Activated naive CD4-positive, alpha-beta T cell treated with anti-CD3 and anti-CD28 coated beads for 36 hours (primary cell): ENCODE measurements at regions of chr18 and their contacts with region 1.

Region 1: DNA sequence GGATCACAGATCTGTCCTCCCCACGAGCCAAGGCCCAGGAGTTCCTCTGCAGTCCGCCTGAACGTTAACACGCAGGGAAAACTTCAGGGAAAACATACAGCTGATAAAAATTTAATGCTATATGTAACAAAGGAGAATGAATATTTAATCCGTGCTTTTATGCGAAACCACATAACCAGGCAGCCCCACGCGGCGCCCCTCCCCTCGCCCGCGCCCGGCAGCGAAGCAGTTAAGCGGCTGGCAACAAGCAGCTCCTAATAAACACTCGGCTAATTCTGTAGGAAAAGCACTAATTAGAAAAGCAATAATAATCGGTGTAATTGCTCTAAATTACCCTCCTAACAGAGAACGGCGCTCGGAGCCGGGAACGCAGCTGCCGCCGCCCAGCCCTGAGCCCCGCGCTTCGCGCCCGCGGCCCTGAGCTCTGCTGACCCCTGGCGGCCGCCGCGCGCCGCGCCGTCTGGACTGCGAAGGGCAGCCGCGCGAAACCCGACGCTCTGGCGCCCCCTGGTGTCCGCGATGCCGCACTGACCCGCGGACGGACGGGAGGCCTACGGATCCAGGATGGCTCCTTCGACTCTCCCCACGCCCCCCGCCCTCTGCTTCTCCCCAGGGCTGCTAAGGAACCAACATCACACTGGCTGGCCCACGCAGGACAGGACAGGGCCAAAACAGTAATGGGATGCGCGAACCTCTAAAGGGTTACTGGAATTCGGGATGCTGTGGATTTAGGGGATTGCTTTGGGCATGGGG is 181.4 kb downstream of the SMAD2 start:
- DNase-seq: peak; percentile 79
- H3K4me3 Mint-ChIP-seq: no peak overlapping the region
- H3K27ac Mint-ChIP-seq: no peak overlapping the region
- H3K4me1 Mint-ChIP-seq: no peaks in the 10 kb centered on the region
- H3K27me3 Mint-ChIP-seq: peaks cover 7% of the 10 kb centered on the region

Region 2: DNA sequence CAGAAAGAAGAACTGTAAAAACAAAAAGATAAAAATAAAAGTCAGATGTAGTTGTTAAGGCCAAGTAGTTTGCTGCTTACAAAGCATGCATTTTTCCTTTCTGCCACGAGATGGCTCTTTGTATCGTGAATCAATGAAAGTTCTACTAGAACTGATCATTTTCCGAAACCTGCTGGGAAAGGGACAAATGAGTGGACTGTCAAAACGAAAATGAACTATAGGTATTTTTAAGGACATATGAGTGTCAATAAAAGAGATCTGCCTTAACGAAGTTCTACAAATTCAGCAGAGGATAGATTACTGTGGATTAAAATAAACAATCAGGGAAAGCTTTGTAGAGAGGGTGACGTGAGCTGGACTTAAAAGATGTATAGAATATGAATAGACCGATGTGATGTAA is 698.6 kb before region 1 on chr18:
- CTCF ChIA-PET with region 1: interaction called, 3 read pairs
- intact Hi-C with region 1: loop called (anchors 2 kb)
- DNase-seq: peak; percentile 31
- H3K4me3 Mint-ChIP-seq: no peak overlapping the region
- H3K27ac Mint-ChIP-seq: no peak overlapping the region
- H3K4me1 Mint-ChIP-seq: peaks cover 3% of the 10 kb centered on the region
- H3K27me3 Mint-ChIP-seq: peaks cover 3% of the 10 kb centered on the region

Region 3: GRCh38 chr18:47100214-47100831 is 648.7 kb before region 1 on chr18:
- CTCF ChIA-PET with region 1: interaction called, 5 read pairs
- intact Hi-C with region 1: loop called (anchors 1 kb)
- DNase-seq: peak; percentile 83
- H3K4me3 Mint-ChIP-seq: no peak overlapping the region
- H3K27ac Mint-ChIP-seq: no peak overlapping the region
- H3K4me1 Mint-ChIP-seq: no peaks in the 10 kb centered on the region
- H3K27me3 Mint-ChIP-seq: no peaks in the 10 kb centered on the region

Region 4: DNA sequence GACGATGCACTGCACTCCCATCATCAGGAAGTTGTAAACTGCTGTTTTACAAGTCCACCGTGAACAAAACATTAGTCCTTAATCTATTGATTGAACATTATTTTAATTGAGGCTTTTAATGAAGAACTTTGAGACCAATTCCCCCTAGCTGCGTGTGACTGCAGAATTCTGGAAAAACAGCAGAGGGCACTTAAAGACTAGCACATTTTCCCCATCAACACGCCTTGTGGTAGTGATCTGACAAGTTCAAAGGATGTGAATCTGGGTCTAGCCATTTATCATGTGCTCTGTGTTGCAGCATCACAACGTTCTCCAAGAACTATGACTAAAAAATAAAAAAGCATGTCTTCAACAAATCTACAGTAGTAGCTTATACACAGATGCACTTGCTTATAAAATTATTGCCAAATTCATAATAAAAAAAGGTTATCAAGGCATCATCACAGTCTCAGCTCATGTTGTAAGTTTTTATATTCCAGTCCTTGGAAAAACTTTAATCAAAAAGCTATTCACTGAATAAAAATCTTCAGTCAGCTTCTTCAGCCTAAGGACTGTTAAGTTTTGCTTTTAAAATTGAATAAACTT is 533.4 kb before region 1 on chr18:
- CTCF ChIA-PET with region 1: interaction called, 22 read pairs
- intact Hi-C with region 1: loop called (anchors 1 kb)
- DNase-seq: peak; percentile 53
- H3K4me3 Mint-ChIP-seq: no peak overlapping the region
- H3K27ac Mint-ChIP-seq: no peak overlapping the region
- H3K4me1 Mint-ChIP-seq: no peaks in the 10 kb centered on the region
- H3K27me3 Mint-ChIP-seq: peaks cover 24% of the 10 kb centered on the region

Region 5: DNA sequence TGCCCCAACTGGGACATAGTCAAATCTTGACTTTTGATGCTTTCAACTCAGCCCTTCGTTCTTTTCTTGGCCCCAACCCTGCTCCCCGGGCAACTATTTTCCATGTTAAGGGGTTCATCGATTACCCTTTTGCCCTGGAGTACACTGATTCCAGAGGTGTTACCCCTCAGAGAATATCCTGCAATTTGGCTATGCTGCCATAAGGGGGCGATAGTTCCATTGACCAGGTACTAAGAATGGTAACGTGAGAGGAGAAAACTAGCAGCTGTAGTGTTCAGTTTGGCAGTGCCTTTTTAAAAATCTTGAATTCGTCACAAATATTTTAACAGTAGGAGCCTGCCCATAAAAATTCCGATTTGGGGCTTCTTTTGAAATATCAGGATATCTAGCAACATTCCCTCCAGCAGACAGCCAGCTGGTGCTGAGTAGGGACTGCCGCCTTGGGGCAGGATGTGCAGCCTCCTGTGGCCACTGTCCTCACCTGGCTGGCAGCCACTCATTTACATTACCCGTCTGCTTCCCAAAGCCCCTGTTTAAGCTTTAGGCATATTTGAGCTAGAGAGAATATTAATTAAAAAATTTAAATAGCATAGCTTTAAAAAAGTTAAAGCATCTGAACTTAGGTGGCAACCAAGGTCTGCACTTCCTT is 351.2 kb before region 1 on chr18:
- CTCF ChIA-PET with region 1: interaction called, 3 read pairs
- intact Hi-C with region 1: loop called (anchors 2 kb)
- DNase-seq: peak; percentile 47
- H3K4me3 Mint-ChIP-seq: no peak overlapping the region
- H3K27ac Mint-ChIP-seq: no peak overlapping the region
- H3K4me1 Mint-ChIP-seq: no peaks in the 10 kb centered on the region
- H3K27me3 Mint-ChIP-seq: peaks cover 1% of the 10 kb centered on the region

Region 6: DNA sequence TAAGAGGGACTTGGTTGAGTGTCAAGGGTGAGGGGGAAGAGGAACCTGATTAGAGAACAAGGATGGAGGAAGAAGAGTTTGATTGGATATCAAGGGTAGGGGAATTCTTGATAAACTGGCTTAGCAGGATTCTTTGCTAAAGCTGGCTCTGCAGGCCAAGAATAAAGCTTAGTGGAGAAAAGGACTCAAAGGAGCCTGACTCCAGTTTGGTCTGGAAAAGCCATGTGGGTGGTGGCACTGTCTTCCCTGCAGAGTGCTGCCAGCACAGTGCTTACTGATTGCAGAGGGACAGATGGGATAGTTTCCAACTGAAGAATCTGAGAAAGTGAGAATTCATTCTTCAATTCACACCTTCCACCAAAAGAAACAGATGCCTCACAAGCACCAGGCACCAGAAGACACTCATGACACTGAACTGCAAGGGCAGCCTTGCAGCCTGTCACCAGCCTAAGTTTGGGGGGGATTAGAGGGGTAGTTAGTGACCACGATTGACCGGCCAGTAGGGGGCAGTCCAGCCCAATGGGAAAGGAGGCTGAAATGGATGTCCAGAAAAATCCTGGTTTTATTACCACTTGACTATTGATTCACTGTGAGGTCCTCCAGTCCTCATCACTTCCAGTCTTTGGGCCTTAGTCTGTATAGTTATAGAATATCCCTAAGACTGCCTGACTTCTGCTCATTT is 153.1 kb before region 1 on chr18:
- CTCF ChIA-PET with region 1: interaction called, 6 read pairs
- intact Hi-C with region 1: loop called (anchors 2 kb)
- DNase-seq: peak; percentile 18
- H3K4me3 Mint-ChIP-seq: no peak overlapping the region
- H3K27ac Mint-ChIP-seq: no peak overlapping the region
- H3K4me1 Mint-ChIP-seq: no peaks in the 10 kb centered on the region
- H3K27me3 Mint-ChIP-seq: peaks cover 21% of the 10 kb centered on the region

Region 7: GRCh38 chr18:47619771-47620448 is 129.1 kb before region 1 on chr18:
- CTCF ChIA-PET with region 1: no interaction called
- intact Hi-C with region 1: no loop called
- DNase-seq: no peak
- H3K4me3 Mint-ChIP-seq: no peak overlapping the region
- H3K27ac Mint-ChIP-seq: no peak overlapping the region
- H3K4me1 Mint-ChIP-seq: no peaks in the 10 kb centered on the region
- H3K27me3 Mint-ChIP-seq: peaks cover 13% of the 10 kb centered on the region

Region 8: GRCh38 chr18:47737956-47738355 is 11.1 kb before region 1 on chr18:
- CTCF ChIA-PET with region 1: interaction called, 10 read pairs
- intact Hi-C with region 1: no loop called
- DNase-seq: no peak
- H3K4me3 Mint-ChIP-seq: no peak overlapping the region
- H3K27ac Mint-ChIP-seq: no peak overlapping the region
- H3K4me1 Mint-ChIP-seq: no peaks in the 10 kb centered on the region
- H3K27me3 Mint-ChIP-seq: peaks cover 32% of the 10 kb centered on the region